ENCODE measurements at regions of chr9 and their contacts with region 1.

Region 1: DNA sequence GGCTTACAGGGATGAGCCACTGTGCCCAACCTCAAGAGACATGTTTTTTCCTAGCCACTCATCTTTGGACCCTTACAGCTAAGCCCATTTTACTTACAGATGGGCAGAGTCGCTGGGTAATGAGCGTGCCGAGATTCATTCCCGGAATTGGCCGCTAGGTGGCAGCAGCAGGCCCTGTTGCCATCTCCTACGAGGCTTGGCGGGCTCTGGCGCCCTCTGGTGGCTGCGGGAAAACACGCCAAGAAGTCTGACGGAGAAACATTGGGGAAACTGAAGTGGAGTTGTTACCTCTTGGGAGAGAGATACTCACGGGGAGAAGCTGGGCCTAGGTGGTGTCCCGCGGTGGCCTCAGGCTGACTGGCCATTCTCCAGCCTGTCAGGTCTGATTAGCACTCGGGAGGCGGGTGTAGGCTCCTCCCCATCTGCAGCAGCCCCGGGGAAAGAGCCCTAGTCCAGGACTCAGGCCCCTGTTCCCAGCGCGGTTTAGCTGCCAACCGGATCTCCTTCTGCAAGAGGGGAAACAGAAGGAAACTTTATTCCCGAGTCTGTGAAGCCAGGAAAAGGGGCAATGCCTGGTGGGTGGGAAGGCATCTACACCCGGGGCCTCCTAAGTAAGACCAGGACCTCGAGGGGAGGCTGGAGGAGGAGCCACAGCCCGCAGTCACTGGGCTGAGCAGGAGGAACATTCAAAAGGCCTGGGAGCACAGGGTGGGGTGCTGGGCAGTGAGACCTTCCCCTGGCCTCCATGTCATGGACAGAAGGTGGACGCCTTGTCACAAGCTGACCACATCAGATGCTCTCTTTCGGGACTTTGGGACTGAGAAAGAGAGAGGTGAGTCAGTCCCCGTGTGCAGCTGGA is 9.7 kb downstream of the PTGES2 start:
- DNase-seq: peak; percentile 93
- CTCF ChIP-seq: peak; percentile 100

Region 2: DNA sequence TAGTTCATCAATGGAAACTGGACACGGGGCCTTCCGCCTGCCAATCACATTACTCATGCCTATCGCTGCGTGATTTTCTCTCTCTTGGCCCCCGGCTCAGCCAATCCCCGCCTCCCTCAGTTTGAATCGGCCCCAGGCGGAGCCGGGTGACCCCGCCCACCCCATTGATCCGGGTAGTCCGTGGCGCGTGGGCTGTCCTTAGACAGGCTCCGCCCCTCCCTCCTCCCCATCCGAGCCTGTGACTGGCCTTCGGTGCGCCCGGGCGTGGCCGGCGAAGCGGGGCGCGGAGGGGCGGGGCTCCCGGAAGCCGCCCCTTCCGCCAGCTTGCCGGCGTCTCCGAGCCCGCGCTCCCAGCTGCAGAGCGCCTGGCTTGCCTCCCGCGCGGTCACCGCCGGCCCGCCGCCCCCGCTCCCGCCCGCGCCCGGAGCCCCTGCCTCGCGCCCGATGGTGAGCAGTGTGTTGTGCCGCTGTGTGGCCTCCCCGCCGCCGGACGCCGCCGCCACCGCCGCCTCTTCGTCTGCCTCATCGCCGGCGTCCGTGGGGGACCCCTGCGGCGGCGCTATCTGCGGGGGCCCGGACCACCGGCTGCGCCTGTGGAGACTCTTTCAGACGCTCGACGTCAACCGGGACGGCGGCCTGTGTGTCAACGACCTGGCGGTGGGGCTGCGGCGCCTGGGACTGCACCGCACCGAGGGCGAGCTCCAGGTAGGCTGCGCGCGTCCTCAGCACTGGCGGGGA is 49.8 kb before region 1 on chr9 and contains the start of gene SLC25A25:
- CTCF ChIA-PET with region 1: interaction called, 11 read pairs
- POLR2A ChIA-PET with region 1: no interaction called
- DNase-seq: peak; percentile 98
- CTCF ChIP-seq: no peak

Region 3: GRCh38 chr9:128094166-128094967 is 23.5 kb before region 1 on chr9:
- CTCF ChIA-PET with region 1: interaction called, 105 read pairs
- POLR2A ChIA-PET with region 1: no interaction called
- DNase-seq: peak; percentile 91
- CTCF ChIP-seq: no peak

Region 4: GRCh38 chr9:128103589-128103962 is 14.3 kb before region 1 on chr9:
- CTCF ChIA-PET with region 1: interaction called, 105 read pairs
- POLR2A ChIA-PET with region 1: interaction called, 3 read pairs
- DNase-seq: no peak
- CTCF ChIP-seq: peak; percentile 6

Region 5: DNA sequence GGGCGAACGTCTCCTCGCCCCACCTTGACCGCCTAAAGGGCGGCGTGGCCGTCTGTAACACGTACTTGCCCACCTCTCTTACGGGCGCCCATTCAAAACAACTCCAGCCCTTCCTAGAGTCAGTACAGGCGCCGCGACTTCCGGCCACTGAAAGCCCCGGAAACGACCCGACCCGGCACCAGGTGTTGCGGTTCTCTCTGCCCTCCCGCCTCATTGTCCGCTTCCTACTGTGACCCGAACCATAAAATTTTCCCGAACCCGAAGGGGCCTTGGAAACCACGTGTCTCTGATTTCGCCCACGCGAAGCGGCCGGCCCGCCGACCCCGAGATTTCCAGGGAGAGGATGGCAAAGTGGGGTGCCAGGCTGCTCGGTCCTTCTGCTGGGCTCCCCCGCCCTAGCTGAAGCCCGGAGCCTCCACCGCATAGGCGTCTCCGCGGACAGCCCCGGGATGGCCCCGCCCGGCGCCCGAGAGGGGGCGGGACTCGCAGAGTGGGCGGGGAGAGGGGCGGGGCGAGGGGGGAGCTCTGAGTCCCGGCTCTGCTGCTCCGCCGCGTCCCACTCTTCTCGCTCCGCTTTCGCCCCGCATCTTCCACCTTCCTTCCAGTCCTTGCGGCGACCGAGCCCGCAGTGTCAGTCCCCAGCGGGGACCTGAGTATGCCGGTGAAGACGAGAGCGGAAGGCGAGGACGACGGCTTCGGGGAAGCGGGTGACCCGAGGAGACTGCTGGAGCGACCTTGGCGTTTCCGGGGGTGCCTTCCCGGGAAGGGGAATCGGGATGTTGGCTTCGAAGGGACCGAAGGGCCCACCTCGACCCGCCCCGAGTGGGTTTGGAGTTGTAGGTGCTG is 10.4 kb after region 1 on chr9:
- CTCF ChIA-PET with region 1: interaction called, 110 read pairs
- POLR2A ChIA-PET with region 1: interaction called, 4 read pairs
- DNase-seq: peak; percentile 91
- CTCF ChIP-seq: no peak

Region 6: DNA sequence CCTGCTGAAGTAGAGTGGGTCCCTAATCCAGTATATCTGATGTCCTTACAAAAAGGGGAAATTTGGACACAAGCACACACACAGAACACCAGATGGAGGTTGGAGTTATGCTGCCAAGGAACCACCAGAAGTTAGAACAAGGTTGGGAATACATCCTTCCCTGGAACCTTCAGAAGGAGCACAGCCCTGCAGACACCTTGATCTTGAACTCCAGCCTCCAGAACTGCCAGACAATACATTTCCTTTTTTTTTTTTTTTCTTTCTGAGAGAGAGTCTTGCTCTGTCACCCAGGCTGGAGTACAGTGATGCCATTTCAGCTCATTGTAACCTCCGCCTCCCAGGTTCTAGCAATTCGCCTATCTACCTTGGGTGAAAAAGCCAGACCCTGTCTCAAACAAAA is 330.9 kb after region 1 on chr9:
- CTCF ChIA-PET with region 1: no interaction called
- POLR2A ChIA-PET with region 1: no interaction called
- DNase-seq: no peak
- CTCF ChIP-seq: no peak

Measured in GM10248 (cell line).